H1 (cell line): ENCODE measurements at regions of chr1 and their contacts with region 1.

Region 1: GRCh38 chr1:226109829-226110248 is 47.3 kb downstream of the H3-3A start:
- DNase-seq: peak in 1 of 2 experiments; percentile 82
- H3K4me3 ChIP-seq: peak overlapping the region; percentile 59 to 83 (median 60)
- H3K27ac ChIP-seq: no peak overlapping the region
- H3K4me1 ChIP-seq: peaks cover 15 to 37% (median 29%) of the 10 kb centered on the region in 4 experiments
- H3K27me3 ChIP-seq: peaks cover 0 to 6% (median 3%) of the 10 kb centered on the region in 4 experiments; a peak in 5 of 7 replicates
- CTCF ChIP-seq: 0 out of 4 replicates have a peak, but pooled peaks of 1 of the 3 experiments have one; percentile 8
- EP300 ChIP-seq: no peak
- POLR2A ChIP-seq: no peak
- RAD21 ChIP-seq: no peak; a peak in 1 of 4 replicates

Region 2: DNA sequence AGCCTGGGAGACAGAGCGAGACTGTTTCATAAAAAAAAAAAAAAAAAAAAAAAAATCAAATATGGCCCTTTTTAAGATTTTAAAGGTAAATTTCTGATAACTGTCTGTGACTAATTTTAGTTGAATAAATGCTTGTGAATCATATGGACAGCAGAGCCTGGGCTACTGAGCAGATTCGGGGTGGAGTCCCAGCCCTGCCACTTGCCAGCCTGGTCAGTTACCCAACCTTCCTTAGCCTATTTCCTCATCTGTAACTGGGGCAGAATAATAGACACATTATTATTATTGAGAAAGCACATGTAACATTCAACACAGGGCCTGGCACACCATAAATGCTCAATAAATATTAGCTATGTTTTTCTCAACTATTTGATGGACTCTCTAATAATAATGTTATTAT is 58.5 kb before region 1 on chr1:
- CTCF ChIA-PET with region 1: no interaction called
- POLR2A ChIA-PET with region 1: no interaction called
- DNase-seq: no peak
- H3K4me3 ChIP-seq: no peak overlapping the region
- H3K27ac ChIP-seq: no peak overlapping the region
- H3K4me1 ChIP-seq: peaks cover 0 to 4% (median 2%) of the 10 kb centered on the region in 4 experiments; a peak in 4 of 7 replicates
- H3K27me3 ChIP-seq: no peaks in the 10 kb centered on the region
- CTCF ChIP-seq: no peak
- EP300 ChIP-seq: no peak
- POLR2A ChIP-seq: no peak
- RAD21 ChIP-seq: no peak

Region 3: GRCh38 chr1:226074046-226074445 is 35.8 kb before region 1 on chr1:
- CTCF ChIA-PET with region 1: no interaction called
- POLR2A ChIA-PET with region 1: interaction called, 28 read pairs
- DNase-seq: no peak
- H3K4me3 ChIP-seq: no peak overlapping the region
- H3K27ac ChIP-seq: no peak overlapping the region
- H3K4me1 ChIP-seq: no peaks in the 10 kb centered on the region
- H3K27me3 ChIP-seq: no peaks in the 10 kb centered on the region
- CTCF ChIP-seq: no peak
- EP300 ChIP-seq: no peak
- POLR2A ChIP-seq: peak; percentile 50 to 82; a peak in 2 of 3 replicates
- RAD21 ChIP-seq: no peak

Region 4: GRCh38 chr1:226083302-226084101 is 26.3 kb before region 1 on chr1:
- CTCF ChIA-PET with region 1: interaction called, 5 read pairs
- POLR2A ChIA-PET with region 1: interaction called, 12 read pairs
- DNase-seq: peak in 1 of 2 experiments; percentile 98
- H3K4me3 ChIP-seq: peak overlapping the region; percentile 60 to 81 (median 71)
- H3K27ac ChIP-seq: no peak overlapping the region
- H3K4me1 ChIP-seq: peaks cover 0 to 5% (median 3%) of the 10 kb centered on the region in 4 experiments; a peak in 5 of 7 replicates
- H3K27me3 ChIP-seq: peaks cover 0 to 11% (median 9%) of the 10 kb centered on the region in 4 experiments; a peak in 3 of 7 replicates
- CTCF ChIP-seq: no peak
- EP300 ChIP-seq: no peak
- POLR2A ChIP-seq: no peak
- RAD21 ChIP-seq: 0 out of 4 replicates have a peak, but pooled peaks of 1 of the 2 experiments have one; percentile 0